T-cell (primary cell): ENCODE measurements at regions of chr12 and their contacts with region 1.

Region 1: GRCh38 chr12:104896146-104896545 is 61.9 kb downstream of the SLC41A2 start:
- DNase-seq: no peak
- ATAC-seq: no peak
- H3K4me3 ChIP-seq: no peak overlapping the region
- H3K4me3 Mint-ChIP-seq: no peak overlapping the region
- H3K27ac ChIP-seq: no peak overlapping the region
- H3K27ac Mint-ChIP-seq: no peak overlapping the region
- H3K4me1 ChIP-seq: no peaks in the 10 kb centered on the region
- H3K4me1 Mint-ChIP-seq: no peaks in the 10 kb centered on the region
- H3K27me3 ChIP-seq: no peaks in the 10 kb centered on the region
- H3K27me3 Mint-ChIP-seq: peaks cover 0 to 6% of the 10 kb centered on the region in 2 donors

Region 2: GRCh38 chr12:104802198-104802597 is 93.9 kb before region 1 on chr12:
- CTCF ChIA-PET with region 1: no interaction called
- POLR2A ChIA-PET with region 1: no interaction called
- DNase-seq: no peak
- ATAC-seq: no peak
- H3K4me3 ChIP-seq: no peak overlapping the region
- H3K4me3 Mint-ChIP-seq: no peak overlapping the region
- H3K27ac ChIP-seq: no peak overlapping the region
- H3K27ac Mint-ChIP-seq: no peak overlapping the region
- H3K4me1 ChIP-seq: no peaks in the 10 kb centered on the region
- H3K4me1 Mint-ChIP-seq: no peaks in the 10 kb centered on the region
- H3K27me3 ChIP-seq: no peaks in the 10 kb centered on the region
- H3K27me3 Mint-ChIP-seq: no peaks in the 10 kb centered on the region

Region 3: GRCh38 chr12:104933128-104933527 is 37.0 kb after region 1 on chr12:
- CTCF ChIA-PET with region 1: interaction called in 1 of 2 experiments, 10 read pairs
- POLR2A ChIA-PET with region 1: no interaction called
- DNase-seq: no peak
- ATAC-seq: no peak
- H3K4me3 ChIP-seq: no peak overlapping the region
- H3K4me3 Mint-ChIP-seq: no peak overlapping the region
- H3K27ac ChIP-seq: no peak overlapping the region
- H3K27ac Mint-ChIP-seq: no peak overlapping the region
- H3K4me1 ChIP-seq: no peaks in the 10 kb centered on the region
- H3K4me1 Mint-ChIP-seq: peaks cover 0 to 4% (median 1%) of the 10 kb centered on the region in 3 donors
- H3K27me3 ChIP-seq: no peaks in the 10 kb centered on the region
- H3K27me3 Mint-ChIP-seq: peaks cover 0 to 7% of the 10 kb centered on the region in 2 donors